Right ventricle myocardium superior (tissue), 1 donor: ENCODE measurements at regions of chr4 and their contacts with region 1.

Region 1: DNA sequence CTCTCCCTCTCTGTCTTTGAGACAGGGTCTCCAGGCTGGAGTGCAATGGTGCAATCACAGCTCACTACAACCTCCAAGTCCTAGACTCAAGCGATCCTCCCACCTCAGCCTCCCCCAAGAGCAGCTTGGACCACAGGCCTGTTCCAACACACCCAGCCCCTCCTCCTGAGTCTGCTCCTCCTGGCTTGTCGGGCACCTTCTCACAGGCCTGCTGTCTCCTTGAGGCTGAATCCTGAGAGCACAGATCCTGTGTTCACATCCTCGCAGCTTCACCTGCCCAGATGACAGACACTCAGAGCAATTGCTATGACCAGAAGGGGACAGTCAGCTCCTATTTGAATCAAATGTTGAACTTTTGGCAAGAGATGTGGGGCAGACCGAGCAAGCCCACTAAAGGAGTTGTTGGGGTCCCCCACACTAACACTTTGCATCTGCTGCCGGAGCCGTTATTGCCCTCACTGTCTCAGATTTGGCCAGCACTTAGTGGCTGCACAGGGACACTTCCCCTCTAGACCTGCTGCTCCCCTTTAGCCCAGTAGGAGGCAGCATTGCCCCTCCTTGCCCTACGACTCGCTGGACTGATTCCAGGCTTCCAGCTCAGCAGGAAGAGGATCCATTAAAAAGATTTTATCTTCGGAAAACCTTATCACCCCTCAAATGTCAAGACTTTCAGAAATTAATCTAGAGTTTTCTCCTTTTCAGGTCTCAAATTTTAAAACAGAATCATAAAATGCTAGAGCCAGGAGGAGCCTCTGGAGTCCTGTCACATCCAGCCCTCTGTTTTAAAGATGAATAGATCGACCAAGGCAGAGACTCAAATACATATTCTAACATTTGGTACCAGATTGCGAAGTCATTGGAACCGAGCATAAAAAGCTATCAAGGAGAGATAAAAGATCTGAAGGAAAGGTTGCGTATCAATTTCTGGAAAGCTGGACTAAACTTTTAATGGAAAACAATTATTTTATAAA is 113.7 kb downstream of the USP46 start:
- DNase-seq: peak; percentile 85
- ATAC-seq: peak; percentile 82

Region 2: DNA sequence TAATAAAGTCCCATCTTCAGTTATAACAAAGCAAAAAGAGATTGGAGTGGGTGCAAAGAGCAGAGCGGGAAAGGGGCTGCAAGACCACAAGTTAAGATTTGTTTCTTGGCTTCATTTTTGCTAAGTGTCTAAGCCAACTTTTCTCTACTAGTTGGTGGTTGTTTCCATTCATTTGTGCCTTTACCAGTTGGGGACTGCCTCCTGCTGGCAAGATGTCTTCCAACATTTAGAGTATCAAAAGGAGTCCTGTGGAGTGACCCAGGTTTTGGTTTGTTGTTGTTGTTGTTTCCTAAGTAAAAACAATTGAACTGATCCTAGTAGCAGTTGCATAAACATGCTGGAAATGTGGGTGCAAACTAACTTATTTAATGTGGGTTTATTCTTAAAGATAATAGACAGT is 373.2 kb before region 1 on chr4:
- intact Hi-C with region 1: no loop called
- DNase-seq: no peak
- ATAC-seq: no peak

Region 3: DNA sequence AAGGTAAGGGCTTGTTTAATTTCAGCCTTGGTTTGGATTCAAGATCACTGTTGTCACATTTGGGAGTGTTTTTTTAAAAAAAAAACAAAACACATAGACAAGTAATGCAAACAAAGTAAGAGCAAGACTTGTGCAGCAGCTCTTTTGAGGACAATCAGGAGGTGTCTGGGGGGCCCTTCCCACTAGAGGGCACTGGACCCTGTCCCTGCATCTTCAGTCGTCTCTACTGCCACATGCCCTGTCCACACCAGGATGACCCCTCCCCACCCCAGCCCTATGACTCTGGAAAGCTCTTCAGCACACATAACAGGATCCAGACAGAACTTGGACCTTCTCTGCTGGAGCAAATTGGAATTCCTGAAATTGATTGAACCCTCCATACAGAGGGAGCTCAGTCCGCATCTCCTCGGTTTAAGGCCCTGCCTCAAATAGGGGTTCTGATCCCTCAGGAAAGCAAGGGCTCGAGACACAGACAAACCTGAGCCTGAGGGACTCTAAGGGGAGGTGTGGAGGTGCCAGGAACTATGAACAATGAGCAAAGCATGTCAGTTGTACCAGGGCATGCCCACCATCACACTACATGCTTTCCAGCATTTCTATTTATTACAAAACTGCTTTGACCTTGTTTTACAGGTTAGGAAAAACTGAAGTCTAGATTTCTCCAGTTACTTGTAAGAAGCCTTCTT is 42.9 kb after region 1 on chr4:
- intact Hi-C with region 1: loop called (anchors 5 kb)
- DNase-seq: peak; percentile 49
- ATAC-seq: peak; percentile 34

Region 4: DNA sequence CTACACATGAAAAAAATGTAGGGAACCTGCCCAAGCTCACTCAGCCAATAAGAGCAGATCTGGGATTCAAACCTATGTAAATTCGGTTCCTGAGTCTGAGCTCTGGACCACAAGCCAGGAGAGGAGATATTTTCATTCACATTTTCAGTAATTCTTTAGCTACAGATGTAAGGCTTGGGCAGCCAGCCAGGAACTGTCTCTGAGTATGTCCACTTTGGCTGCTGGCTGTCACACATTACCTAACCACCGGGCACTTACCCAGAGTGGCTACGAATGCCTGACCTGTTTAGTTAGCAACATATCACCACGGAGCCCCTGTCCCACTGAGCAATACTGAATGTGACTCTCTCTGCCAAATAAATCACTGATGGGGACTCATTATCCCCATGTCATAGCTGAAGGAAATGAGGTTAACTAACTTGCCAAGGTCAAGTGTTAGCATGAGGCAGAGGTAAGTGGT is 98.4 kb after region 1 on chr4:
- intact Hi-C with region 1: loop called (anchors 10 kb)
- DNase-seq: peak; percentile 89
- ATAC-seq: peak; percentile 94